ENCODE measurements at regions of chr20 and their contacts with region 1.

Region 1: GRCh38 chr20:45436732-45437391 is 20.9 kb downstream of the PIGT start:
- DNase-seq: peak; percentile 63
- ATAC-seq: peak; percentile 99
- H3K4me3 ChIP-seq: peak overlapping the region; percentile 57 to 67
- H3K27ac ChIP-seq: no peak overlapping the region
- H3K4me1 ChIP-seq: peaks cover 0 to 12% of the 10 kb centered on the region in 2 experiments; a peak in 2 of 4 replicates
- H3K27me3 ChIP-seq: no peaks in the 10 kb centered on the region
- CTCF ChIP-seq: peak; percentile 90 to 94 (median 93)
- POLR2A ChIP-seq: no peak
- RAD21 ChIP-seq: peak; percentile 97

Region 2: DNA sequence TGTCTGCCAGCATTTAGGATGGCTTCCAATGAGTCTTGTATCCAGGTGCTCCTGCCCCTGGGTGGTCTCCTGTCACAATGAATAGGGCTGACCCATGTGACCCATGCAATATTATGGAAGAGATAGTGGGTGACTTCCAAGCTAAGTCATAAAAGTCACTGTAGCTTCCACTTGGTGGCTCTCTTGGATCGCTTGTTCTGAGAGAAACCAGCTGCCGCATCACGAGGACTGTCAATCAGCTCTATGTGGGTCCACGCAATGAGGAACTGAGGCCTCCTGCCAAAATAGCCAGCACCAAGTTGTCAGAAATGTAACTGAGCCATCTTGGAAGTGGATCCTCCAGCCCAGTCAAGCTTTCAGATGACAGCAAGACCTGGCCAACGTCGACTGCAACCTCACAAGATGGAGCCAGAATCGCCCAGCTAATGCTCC is 113.9 kb before region 1 on chr20:
- CTCF ChIA-PET with region 1: interaction called, 100 read pairs
- POLR2A ChIA-PET with region 1: interaction called, 10 read pairs
- RAD21 ChIA-PET with region 1: interaction called, 11 to 14 read pairs
- intact Hi-C with region 1: loop called (anchors 1 kb)
- DNase-seq: peak; percentile 31
- ATAC-seq: peak; percentile 68
- H3K4me3 ChIP-seq: no peak overlapping the region
- H3K27ac ChIP-seq: no peak overlapping the region
- H3K4me1 ChIP-seq: no peaks in the 10 kb centered on the region
- H3K27me3 ChIP-seq: no peaks in the 10 kb centered on the region
- CTCF ChIP-seq: peak; percentile 13 to 79 (median 28); a peak in 3 of 6 replicates
- POLR2A ChIP-seq: no peak
- RAD21 ChIP-seq: peak; percentile 91

Region 3: GRCh38 chr20:45362804-45363610 is 73.9 kb before region 1 on chr20 and contains the start of gene SYS1:
- CTCF ChIA-PET with region 1: interaction called, 55 read pairs
- POLR2A ChIA-PET with region 1: interaction called, 11 read pairs
- RAD21 ChIA-PET with region 1: interaction called in 1 of 2 experiments, 6 read pairs
- intact Hi-C with region 1: loop called (anchors 1 kb)
- DNase-seq: peak; percentile 96
- ATAC-seq: peak; percentile 85
- H3K4me3 ChIP-seq: peak within 1 kb of the TSS; percentile 72 to 98
- H3K27ac ChIP-seq: peak within 1 kb of the TSS; percentile 80
- H3K4me1 ChIP-seq: peaks cover 40 to 50% of the 10 kb centered on the region in 2 experiments
- H3K27me3 ChIP-seq: no peaks in the 10 kb centered on the region
- CTCF ChIP-seq: peak; percentile 73 to 83 (median 79)
- POLR2A ChIP-seq: peak; percentile 76
- RAD21 ChIP-seq: peak; percentile 80
- total RNA-seq, gene SYS1: 20.5 TPM

Region 4: DNA sequence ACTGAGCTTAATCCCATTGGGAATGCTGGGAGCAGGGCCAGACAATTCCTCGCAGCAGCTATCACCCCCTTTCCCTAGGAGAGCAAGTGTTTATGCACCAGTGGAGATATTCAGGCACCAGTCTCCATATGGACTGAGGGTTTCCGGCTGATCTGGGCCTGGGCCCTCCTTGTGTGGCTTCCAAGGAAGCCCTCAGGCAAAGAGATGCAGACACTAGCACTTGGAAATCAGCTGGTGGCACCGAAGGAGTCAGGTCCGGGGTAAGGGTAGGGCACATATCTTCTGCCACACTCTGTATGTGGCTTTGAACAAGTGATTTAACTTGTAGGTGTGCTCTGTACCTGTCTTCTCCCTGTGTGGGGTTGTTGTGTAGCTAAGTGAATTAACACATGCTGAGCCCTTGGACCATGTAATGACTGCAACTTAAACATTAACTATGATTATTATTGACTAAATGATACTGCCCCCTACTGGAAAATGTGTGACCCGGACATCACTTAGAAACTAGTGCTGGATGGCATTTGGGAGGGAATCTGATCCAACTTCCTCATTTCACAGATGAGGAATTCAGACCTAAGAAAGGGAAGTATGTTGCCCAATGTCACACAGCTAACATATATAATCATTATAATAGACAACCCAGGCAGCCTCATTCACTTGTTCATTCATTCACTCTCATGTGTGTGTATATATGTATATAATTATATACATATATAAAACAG is 13.4 kb after region 1 on chr20:
- CTCF ChIA-PET with region 1: interaction called, 27 read pairs
- POLR2A ChIA-PET with region 1: no interaction called
- RAD21 ChIA-PET with region 1: no interaction called
- intact Hi-C with region 1: no loop called
- DNase-seq: peak; percentile 31
- ATAC-seq: peak; percentile 70
- H3K4me3 ChIP-seq: no peak overlapping the region
- H3K27ac ChIP-seq: no peak overlapping the region
- H3K4me1 ChIP-seq: no peaks in the 10 kb centered on the region; a peak in 1 of 4 replicates
- H3K27me3 ChIP-seq: no peaks in the 10 kb centered on the region
- CTCF ChIP-seq: peak; percentile 60 to 78 (median 71); a peak in 5 of 6 replicates
- POLR2A ChIP-seq: no peak
- RAD21 ChIP-seq: peak; percentile 65

Measured in HCT116 (cell line).